Activated naive CD8-positive, alpha-beta T cell treated with anti-CD3 and anti-CD28 coated beads, Interleukin-2, amount 10 ng/mL, durations not matched to agents 7 days and 5 days (primary cell): ENCODE measurements at regions of chr1 and their contacts with region 1.

Region 1: DNA sequence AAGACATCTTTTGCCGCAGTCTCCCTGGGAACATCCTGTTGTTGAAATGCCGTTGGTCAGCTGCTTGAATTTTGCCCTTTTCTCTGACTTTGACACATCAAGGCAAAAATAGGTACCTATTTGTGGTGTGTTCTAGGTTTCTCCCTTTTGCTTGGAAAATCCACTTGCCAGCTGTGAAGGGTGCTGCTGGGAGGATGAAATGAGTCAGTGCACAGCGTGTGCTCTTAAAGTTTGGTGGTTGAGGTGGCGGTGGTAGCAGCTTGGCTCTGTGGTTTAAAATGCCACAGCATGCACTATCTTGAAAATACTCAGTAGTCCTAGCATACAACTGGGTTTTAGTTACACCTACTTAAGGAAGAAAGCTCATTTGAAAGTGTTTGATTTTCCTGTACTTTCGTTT is 183.8 kb downstream of the DHRS3 start:
- DNase-seq: peak; percentile 65
- ATAC-seq: peak; percentile 40
- H3K4me3 Mint-ChIP-seq: peak overlapping the region; percentile 46
- H3K27ac Mint-ChIP-seq: peak overlapping the region; percentile 96
- H3K4me1 Mint-ChIP-seq: peaks cover 74% of the 10 kb centered on the region
- H3K27me3 Mint-ChIP-seq: no peaks in the 10 kb centered on the region

Region 2: DNA sequence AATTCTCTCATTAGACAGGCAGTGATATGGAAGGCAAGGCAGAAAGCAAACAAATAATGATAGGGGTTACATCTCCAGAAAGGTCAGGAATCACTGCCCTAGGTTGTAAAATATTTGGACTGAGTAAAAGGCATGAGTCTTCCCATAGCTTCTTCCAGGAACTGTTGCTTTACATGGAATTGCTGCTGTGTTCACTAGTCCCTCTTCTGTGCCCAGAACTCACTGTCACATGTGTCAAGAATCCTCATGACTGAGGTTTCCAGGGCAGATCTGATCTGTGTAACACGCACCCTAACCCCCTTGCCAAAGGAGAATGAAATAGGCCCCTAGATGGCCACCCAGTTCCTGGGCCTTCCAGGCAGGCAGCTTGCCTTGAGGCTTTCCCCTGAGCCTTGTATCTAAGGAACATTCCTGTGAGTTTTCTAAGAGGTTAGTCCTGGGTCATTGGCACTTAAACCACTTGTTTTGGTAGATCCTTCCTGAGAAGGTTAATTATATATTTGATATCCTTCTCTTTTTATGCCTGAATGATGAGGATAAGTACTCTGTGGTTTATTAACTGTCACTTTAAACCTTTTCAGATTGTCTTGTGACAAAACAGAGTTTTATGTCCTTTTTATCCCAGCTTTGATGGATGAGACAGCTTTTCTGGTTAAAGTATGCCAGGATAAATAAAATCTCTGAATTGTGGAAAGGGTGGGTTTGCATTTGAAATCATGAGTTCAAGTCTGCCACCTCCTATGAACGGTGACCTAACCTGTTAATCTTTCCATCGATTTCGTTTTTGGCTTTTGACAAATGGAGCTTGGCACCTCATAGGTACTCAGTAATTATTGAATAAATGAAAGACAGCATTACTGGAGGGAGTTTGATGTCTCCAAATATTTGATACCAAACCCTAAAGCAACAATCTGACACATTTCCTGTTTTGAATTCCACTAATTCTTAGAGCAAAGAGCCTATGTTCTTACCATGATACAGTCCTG is 20.5 kb after region 1 on chr1:
- POLR2A ChIA-PET with region 1: interaction called, 164 read pairs
- DNase-seq: no peak
- ATAC-seq: no peak
- H3K4me3 Mint-ChIP-seq: peak overlapping the region; percentile 40
- H3K27ac Mint-ChIP-seq: peak overlapping the region; percentile 98
- H3K4me1 Mint-ChIP-seq: peaks cover 82% of the 10 kb centered on the region
- H3K27me3 Mint-ChIP-seq: no peaks in the 10 kb centered on the region

Region 3: GRCh38 chr1:12477936-12478611 is 43.9 kb after region 1 on chr1:
- POLR2A ChIA-PET with region 1: interaction called, 102 read pairs
- DNase-seq: peak; percentile 55
- ATAC-seq: peak; percentile 37
- H3K4me3 Mint-ChIP-seq: peak overlapping the region; percentile 79
- H3K27ac Mint-ChIP-seq: peak overlapping the region; percentile 91
- H3K4me1 Mint-ChIP-seq: peaks cover 86% of the 10 kb centered on the region
- H3K27me3 Mint-ChIP-seq: no peaks in the 10 kb centered on the region